CD4-positive, alpha-beta memory T cell (primary cell): ENCODE measurements at regions of chr2 and their contacts with region 1.

Region 1: GRCh38 chr2:32356735-32357644 is at the start of gene BIRC6:
- DNase-seq: peak; percentile 86 to 90 (median 88)
- H3K4me3 ChIP-seq: peak within 1 kb of the TSS; percentile 78 to 80
- H3K4me3 Mint-ChIP-seq: peak within 1 kb of the TSS; percentile 82 to 94 (median 92)
- H3K27ac ChIP-seq: peak within 1 kb of the TSS; percentile 79
- H3K27ac Mint-ChIP-seq: peak within 1 kb of the TSS; percentile 84 to 98 (median 96)
- H3K4me1 ChIP-seq: peaks cover 47% of the 10 kb centered on the region
- H3K4me1 Mint-ChIP-seq: peaks cover 32 to 48% (median 39%) of the 10 kb centered on the region in 4 donors
- H3K27me3 ChIP-seq: no peaks in the 10 kb centered on the region
- H3K27me3 Mint-ChIP-seq: no peaks in the 10 kb centered on the region
- total RNA-seq, gene BIRC6: 149 to 151 TPM

Region 2: DNA sequence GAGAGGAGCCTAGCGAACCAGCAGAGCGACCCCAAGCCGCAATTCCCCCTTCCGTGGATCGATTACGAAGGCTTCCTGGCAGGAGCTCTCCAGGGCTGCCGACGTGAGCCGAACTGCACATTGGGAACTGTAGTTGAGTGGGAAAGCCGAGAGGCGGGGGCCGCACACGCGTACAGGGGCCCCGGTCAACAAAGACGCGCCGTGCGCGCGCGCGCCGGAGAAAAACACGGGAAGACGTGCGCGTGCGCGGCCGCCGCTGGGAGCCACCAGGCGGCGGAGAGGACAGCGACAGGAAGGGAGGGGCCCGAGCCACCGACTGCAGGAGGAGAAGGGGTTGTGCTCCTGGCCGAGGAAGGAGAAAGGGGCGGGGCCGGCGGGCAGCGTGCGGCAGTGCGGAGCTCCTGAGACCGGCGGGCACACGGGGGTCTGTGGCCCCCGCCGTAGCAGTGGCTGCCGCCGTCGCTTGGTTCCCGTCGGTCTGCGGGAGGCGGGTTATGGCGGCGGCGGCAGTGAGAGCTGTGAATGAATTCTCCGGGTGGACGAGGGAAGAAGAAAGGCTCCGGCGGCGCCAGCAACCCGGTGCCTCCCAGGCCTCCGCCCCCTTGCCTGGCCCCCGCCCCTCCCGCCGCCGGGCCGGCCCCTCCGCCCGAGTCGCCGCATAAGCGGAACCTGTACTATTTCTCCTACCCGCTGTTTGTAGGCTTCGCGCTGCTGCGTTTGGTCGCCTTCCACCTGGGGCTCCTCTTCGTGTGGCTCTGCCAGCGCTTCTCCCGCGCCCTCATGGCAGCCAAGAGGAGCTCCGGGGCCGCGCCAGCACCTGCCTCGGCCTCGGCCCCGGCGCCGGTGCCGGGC is 293.5 kb before region 1 on chr2 and contains the start of gene SPAST:
- CTCF ChIA-PET with region 1: interaction called, 5 read pairs
- POLR2A ChIA-PET with region 1: interaction called, 3 read pairs
- intact Hi-C with region 1: loop called (anchors 5 kb)
- DNase-seq: peak; percentile 96 to 97 (median 97)
- H3K4me3 ChIP-seq: peak within 1 kb of the TSS; percentile 93 to 94
- H3K4me3 Mint-ChIP-seq: peak within 1 kb of the TSS; percentile 98 to 99 (median 99)
- H3K27ac ChIP-seq: peak within 1 kb of the TSS; percentile 77
- H3K27ac Mint-ChIP-seq: peak within 1 kb of the TSS; percentile 89 to 98 (median 97)
- H3K4me1 ChIP-seq: peaks cover 41% of the 10 kb centered on the region
- H3K4me1 Mint-ChIP-seq: peaks cover 11 to 43% (median 31%) of the 10 kb centered on the region in 4 donors
- H3K27me3 ChIP-seq: no peaks in the 10 kb centered on the region
- H3K27me3 Mint-ChIP-seq: no peaks in the 10 kb centered on the region
- total RNA-seq, gene SPAST: 22.5 to 23.2 TPM

Region 3: DNA sequence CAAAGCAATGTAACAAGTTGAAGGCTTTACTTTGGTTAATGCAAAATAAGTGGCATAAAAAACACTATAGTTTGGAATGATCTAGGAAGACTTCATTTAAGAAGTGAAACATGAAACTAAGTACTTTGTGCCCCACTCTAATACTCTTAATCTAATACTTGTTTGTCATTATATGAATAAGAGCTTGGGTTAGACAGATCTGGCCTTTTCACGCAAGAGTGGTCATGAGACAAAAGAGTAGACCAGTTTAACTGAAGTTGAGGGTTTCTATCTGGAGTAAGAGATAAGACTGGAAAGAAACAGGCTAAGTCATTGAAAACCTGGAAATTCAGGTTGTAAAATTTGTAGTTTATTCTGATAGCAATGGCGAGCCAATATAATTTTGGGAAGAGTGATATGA is 188.5 kb before region 1 on chr2:
- CTCF ChIA-PET with region 1: no interaction called
- POLR2A ChIA-PET with region 1: interaction called, 3 read pairs
- intact Hi-C with region 1: loop called (anchors 5 kb)
- DNase-seq: no peak
- H3K4me3 ChIP-seq: no peak overlapping the region
- H3K4me3 Mint-ChIP-seq: peak overlapping the region in 1 of 8 donors; percentile 33
- H3K27ac ChIP-seq: no peak overlapping the region
- H3K27ac Mint-ChIP-seq: peak overlapping the region in 1 of 7 donors; percentile 38
- H3K4me1 ChIP-seq: peaks cover 23% of the 10 kb centered on the region
- H3K4me1 Mint-ChIP-seq: peaks cover 30 to 56% (median 46%) of the 10 kb centered on the region in 4 donors
- H3K27me3 ChIP-seq: no peaks in the 10 kb centered on the region
- H3K27me3 Mint-ChIP-seq: no peaks in the 10 kb centered on the region

Region 4: GRCh38 chr2:32277674-32278482 is 79.1 kb before region 1 on chr2 and contains the start of gene YIPF4:
- CTCF ChIA-PET with region 1: no interaction called
- POLR2A ChIA-PET with region 1: interaction called, 3 read pairs
- intact Hi-C with region 1: loop called (anchors 2 kb)
- DNase-seq: peak; percentile 88 to 92 (median 90)
- H3K4me3 ChIP-seq: peak within 1 kb of the TSS; percentile 90 to 98
- H3K4me3 Mint-ChIP-seq: peak within 1 kb of the TSS; percentile 90 to 97 (median 96)
- H3K27ac ChIP-seq: peak within 1 kb of the TSS; percentile 72
- H3K27ac Mint-ChIP-seq: peak within 1 kb of the TSS; percentile 96 to 99 (median 97)
- H3K4me1 ChIP-seq: peaks cover 43% of the 10 kb centered on the region
- H3K4me1 Mint-ChIP-seq: peaks cover 11 to 45% (median 32%) of the 10 kb centered on the region in 4 donors
- H3K27me3 ChIP-seq: no peaks in the 10 kb centered on the region
- H3K27me3 Mint-ChIP-seq: peaks cover 0 to 1% of the 10 kb centered on the region in 2 donors
- total RNA-seq, gene YIPF4: 46.1 to 51.9 TPM

Region 5: GRCh38 chr2:32377928-32378327 is 20.9 kb after region 1 on chr2:
- CTCF ChIA-PET with region 1: no interaction called
- POLR2A ChIA-PET with region 1: no interaction called
- intact Hi-C with region 1: loop called (anchors 2 kb)
- DNase-seq: no peak
- H3K4me3 ChIP-seq: no peak overlapping the region
- H3K4me3 Mint-ChIP-seq: no peak overlapping the region
- H3K27ac ChIP-seq: no peak overlapping the region
- H3K27ac Mint-ChIP-seq: peak overlapping the region in 3 of 7 donors; percentile 4 to 52 (median 22)
- H3K4me1 ChIP-seq: peaks cover 43% of the 10 kb centered on the region
- H3K4me1 Mint-ChIP-seq: peaks cover 37 to 62% (median 50%) of the 10 kb centered on the region in 4 donors
- H3K27me3 ChIP-seq: no peaks in the 10 kb centered on the region
- H3K27me3 Mint-ChIP-seq: no peaks in the 10 kb centered on the region

Region 6: GRCh38 chr2:32627814-32628579 is 271.0 kb after region 1 on chr2 and contains the start of gene TTC27:
- CTCF ChIA-PET with region 1: no interaction called
- POLR2A ChIA-PET with region 1: no interaction called
- intact Hi-C with region 1: loop called (anchors 1 kb)
- DNase-seq: peak; percentile 94 to 98 (median 95)
- H3K4me3 ChIP-seq: peak within 1 kb of the TSS; percentile 66 to 77
- H3K4me3 Mint-ChIP-seq: peak within 1 kb of the TSS; percentile 91 to 97 (median 95)
- H3K27ac ChIP-seq: peak within 1 kb of the TSS; percentile 65
- H3K27ac Mint-ChIP-seq: peak within 1 kb of the TSS; percentile 81 to 98 (median 94)
- H3K4me1 ChIP-seq: peaks cover 11% of the 10 kb centered on the region
- H3K4me1 Mint-ChIP-seq: peaks cover 15 to 46% (median 29%) of the 10 kb centered on the region in 4 donors
- H3K27me3 ChIP-seq: no peaks in the 10 kb centered on the region
- H3K27me3 Mint-ChIP-seq: no peaks in the 10 kb centered on the region
- total RNA-seq, gene TTC27: 20.9 to 27.5 TPM

Region 7: DNA sequence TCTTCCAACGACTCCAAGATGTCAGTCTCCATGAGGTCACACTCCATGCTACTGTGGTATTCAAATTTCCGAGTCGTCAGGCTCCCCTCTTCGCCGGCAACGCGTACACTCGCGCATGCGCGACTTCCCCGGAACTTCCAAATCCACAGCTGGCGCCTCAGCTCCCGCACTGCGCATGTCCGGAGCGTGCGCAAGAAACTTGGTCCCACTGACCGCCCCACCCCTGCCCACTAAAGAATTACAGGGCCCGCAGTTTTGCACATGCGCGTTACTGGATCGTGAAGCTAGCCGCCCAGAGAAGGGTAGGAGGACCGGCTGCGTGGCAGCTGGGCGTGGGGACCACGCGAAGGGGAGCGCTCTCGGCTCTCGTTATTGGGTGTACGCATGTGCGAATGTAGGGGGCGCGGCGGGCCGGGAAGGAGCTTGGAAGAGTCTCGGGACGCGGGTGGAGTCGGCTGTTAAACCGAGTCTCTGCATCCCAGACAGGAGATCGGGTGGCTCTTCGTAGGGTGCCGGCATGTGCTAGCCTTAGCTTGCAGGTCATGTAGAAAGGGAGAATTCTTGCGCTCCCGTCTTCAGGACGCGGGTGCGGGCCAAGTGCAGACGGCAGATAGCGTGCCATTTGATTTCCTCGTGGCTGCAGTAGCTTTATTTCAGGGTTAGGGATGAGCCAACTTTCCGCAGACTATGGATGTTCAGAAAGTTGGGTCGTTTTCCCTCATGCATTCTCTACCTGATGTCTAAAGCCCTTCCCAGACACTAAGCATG is 1242.4 kb after region 1 on chr2 and contains the start of gene FAM98A:
- CTCF ChIA-PET with region 1: no interaction called
- POLR2A ChIA-PET with region 1: no interaction called
- intact Hi-C with region 1: loop called (anchors 5 kb)
- DNase-seq: peak; percentile 98 to 99 (median 99)
- H3K4me3 ChIP-seq: peak within 1 kb of the TSS; percentile 63 to 96
- H3K4me3 Mint-ChIP-seq: peak within 1 kb of the TSS; percentile 94 to 100 (median 98)
- H3K27ac ChIP-seq: peak within 1 kb of the TSS; percentile 80
- H3K27ac Mint-ChIP-seq: peak within 1 kb of the TSS; percentile 90 to 99 (median 97)
- H3K4me1 ChIP-seq: peaks cover 32% of the 10 kb centered on the region
- H3K4me1 Mint-ChIP-seq: peaks cover 23 to 44% (median 35%) of the 10 kb centered on the region in 4 donors
- H3K27me3 ChIP-seq: no peaks in the 10 kb centered on the region
- H3K27me3 Mint-ChIP-seq: no peaks in the 10 kb centered on the region
- total RNA-seq, gene FAM98A: 32.7 to 38.2 TPM